Left colon (tissue), 2 donors: ENCODE measurements at regions of chr14 and their contacts with region 1.

Region 1: DNA sequence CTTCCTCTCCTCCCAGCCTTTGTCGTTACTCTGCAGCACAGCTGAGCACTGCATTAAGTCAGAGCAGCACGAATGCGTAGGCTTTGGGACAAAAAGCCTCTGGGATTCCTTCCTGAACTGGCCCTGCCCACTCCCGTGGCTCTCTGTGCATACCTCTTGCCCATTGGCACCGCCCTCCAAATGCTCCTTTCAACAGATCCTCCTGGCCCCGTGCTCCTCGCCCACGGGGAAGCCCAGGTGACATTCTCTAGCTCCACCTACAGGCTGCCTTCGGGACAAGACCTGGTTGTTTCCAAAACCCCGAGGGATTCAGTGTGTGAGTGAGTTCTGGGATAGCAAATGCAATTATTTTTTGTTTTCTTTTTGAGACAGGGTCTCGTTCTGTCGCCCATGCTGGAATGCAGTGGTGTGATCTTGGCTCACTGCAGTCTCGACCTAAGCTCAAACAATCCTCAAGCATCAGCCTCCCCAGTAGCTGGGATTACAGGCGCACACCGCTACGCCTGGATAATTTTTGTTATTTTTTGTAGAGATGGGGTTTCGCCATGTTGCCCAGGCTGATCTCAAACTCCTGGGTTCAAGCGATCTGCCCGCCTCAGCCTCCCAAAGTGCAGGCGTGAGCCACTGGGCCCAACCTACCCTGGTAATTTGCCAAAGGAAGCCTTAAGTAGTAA is 17.9 kb upstream of the TDRD9 start:
- DNase-seq: peak; percentile 88 to 90
- ATAC-seq: peak; percentile 100

Region 2: GRCh38 chr14:103518422-103519042 is 391.9 kb before region 1 on chr14:
- intact Hi-C with region 1: no loop called
- DNase-seq: peak; percentile 70 to 84
- ATAC-seq: peak; percentile 31

Region 3: DNA sequence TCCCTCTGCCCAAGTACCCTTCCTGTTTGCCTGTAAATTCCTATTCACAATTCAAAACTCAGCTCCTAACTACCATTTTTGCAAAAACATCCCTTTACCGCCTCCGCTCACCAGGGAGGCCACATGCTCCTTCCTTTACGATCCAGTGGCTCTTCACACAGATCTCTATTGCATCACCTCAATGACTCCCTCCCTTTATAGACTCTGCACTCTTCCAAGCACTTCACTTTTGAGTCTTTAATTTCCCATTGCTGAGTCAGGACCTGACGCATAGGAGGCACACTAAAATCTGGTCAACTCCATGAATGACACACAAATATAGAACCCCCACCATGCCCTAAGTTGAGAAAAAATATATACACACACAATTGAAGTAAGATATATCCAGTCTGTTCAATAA is 108.9 kb before region 1 on chr14:
- intact Hi-C with region 1: loop called (anchors 5 to 10 kb)
- DNase-seq: no peak
- ATAC-seq: peak; percentile 94

Region 4: GRCh38 chr14:103808403-103809001 is 101.9 kb before region 1 on chr14:
- intact Hi-C with region 1: loop called (anchors 5 to 10 kb)
- DNase-seq: peak; percentile 63 to 77
- ATAC-seq: peak; percentile 89

Region 5: DNA sequence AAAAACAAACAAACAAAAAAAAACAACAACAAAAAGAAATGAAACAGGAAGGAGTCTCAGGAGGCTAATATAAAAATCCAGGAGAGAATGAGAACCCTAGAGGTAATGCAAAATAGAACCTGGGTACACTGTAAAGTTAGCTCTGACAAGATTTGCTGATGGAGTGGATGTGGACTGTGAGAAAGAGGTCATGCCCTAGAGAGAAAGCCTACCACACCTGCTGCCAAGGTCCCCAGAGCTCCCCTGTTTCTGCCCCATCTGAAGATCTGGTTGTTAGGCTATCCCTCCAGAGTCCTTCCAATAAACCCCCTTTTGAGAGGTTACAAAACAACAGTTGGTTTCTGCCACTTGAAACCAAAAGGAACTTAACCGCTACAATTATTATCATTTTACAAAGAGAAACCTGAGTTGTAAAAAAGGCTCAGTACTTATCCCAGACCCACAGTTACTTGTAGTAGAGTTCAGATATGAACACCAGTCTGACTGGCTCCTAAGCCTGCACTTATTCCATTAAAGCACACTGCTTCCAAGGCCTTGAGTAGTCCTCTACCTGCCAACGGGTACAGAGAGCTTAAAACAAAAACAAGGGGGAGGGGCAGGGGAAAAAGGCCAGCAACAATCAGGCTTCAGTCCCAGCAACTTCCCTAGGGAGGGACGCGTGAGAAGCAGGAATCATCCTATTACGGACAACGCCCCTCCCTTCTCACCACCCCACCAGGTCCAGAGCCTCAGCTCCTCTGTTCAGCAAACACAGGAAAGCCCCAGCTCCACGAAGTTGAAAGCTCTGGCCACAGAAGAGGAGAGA is 90.7 kb before region 1 on chr14:
- intact Hi-C with region 1: loop called in 1 of 2 experiments (anchors 10 kb)
- DNase-seq: peak; percentile 33 to 53
- ATAC-seq: peak; percentile 78

Region 6: DNA sequence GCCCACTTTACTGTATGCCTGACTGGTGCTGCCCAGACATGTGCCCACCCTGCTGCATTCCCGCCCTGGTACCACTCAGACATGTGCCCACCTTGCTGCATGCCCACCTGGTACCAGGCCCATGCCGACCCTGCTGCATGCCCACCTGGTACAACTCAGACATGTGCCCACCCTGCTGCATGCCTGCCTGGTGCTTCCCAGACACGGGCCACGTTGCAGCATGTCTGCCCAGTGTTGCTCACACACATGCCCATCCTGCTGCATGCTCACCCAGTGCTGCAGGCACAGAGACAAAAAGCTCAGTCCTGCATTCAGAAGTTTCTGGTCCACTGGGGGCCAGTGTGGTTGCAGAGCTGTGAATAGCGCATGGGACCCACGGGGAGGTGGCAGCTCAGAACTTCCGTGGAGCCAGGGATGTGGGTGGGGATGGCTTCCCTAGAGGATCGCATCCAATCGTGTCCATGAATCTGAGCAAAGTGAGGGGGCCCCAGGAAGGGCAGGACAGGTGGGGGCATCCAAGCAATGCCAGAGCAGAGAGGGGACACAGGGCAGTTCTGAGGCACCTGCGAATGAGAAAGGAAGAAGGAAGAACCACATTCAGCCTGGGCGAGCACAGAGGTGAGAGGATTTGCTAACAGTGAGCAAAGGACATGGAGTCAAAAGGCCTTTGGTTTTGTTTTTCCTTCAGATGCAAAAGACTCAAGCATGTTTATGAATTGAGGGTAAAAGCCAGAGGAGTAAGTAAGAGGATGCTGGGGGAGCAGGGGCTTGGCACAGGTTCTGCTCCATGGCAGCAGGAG is 493.2 kb after region 1 on chr14:
- intact Hi-C with region 1: no loop called
- DNase-seq: no peak
- ATAC-seq: no peak